ENCODE measurements at regions of chr9 and their contacts with region 1.

Region 1: GRCh38 chr9:94783102-94783664 is 56.7 kb downstream of the AOPEP start:
- DNase-seq: peak; percentile 27
- ATAC-seq: peak; percentile 90
- H3K4me3 ChIP-seq: no peak overlapping the region
- H3K27ac ChIP-seq: no peak overlapping the region
- H3K4me1 ChIP-seq: no peaks in the 10 kb centered on the region
- H3K27me3 ChIP-seq: no peaks in the 10 kb centered on the region
- CTCF ChIP-seq: peak; percentile 48 to 80 (median 71); a peak in 5 of 6 replicates
- EP300 ChIP-seq: no peak
- POLR2A ChIP-seq: no peak
- RAD21 ChIP-seq: peak; percentile 91

Region 2: GRCh38 chr9:94799578-94800264 is 16.5 kb after region 1 on chr9:
- CTCF ChIA-PET with region 1: interaction called, 8 read pairs
- POLR2A ChIA-PET with region 1: interaction called, 3 read pairs
- RAD21 ChIA-PET with region 1: interaction called, 29 read pairs
- SMC1A ChIA-PET with region 1: interaction called, 19 read pairs
- in situ Hi-C with region 1: no loop called
- intact Hi-C with region 1: no loop called
- DNase-seq: no peak
- ATAC-seq: no peak
- H3K4me3 ChIP-seq: no peak overlapping the region
- H3K27ac ChIP-seq: no peak overlapping the region
- H3K4me1 ChIP-seq: peaks cover 39% of the 10 kb centered on the region
- H3K27me3 ChIP-seq: no peaks in the 10 kb centered on the region
- CTCF ChIP-seq: no peak
- EP300 ChIP-seq: no peak
- POLR2A ChIP-seq: no peak
- RAD21 ChIP-seq: no peak

Region 3: DNA sequence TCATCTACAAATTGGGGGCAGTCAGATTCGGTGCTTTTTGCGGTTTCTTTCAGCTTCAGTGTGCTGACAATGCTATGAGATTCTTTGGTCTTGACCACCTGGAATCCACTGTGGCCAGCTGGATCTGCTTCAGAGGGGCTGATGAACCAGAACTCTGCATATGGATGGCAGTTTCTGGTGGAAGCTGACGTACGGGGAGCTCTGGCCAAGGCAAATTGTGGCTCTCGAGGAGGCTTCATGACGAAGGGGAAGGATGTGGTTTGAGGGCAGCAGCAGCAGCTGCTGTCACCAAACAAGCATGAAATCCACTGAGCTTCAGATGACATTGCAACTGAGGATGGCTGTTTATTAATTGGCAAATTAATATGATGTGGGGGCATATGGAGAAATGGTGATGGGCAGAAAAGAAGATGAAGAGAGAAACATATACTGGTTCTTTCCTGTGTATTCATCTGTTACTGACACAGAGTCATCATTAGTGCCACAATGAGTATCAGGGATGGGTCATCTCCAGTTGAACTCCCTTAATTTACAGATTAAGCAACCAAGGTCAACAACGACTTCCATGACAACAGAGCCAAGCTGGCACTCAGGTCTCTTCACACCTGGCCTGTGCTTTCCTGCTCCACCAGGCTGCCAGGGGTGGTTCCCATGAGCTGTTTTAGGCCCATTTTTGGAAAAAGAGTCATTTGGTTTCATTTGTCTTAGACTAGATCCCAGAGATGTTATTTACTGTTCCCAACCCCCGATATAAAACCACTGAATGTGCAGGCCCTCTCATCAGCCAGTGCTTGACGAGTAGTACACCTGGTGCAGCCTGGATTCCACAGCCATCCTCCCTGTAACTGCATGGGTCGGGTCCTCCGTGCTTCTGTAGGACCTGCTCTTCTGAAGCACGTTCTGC is 78.0 kb after region 1 on chr9:
- CTCF ChIA-PET with region 1: interaction called, 5 read pairs
- POLR2A ChIA-PET with region 1: no interaction called
- RAD21 ChIA-PET with region 1: interaction called, 5 read pairs
- SMC1A ChIA-PET with region 1: interaction called, 9 read pairs
- in situ Hi-C with region 1: no loop called
- intact Hi-C with region 1: loop called (anchors 5 kb)
- DNase-seq: peak; percentile 92
- ATAC-seq: peak; percentile 93
- H3K4me3 ChIP-seq: 0 out of 2 replicates have a peak overlapping the region, but pooled peaks have one; percentile 30
- H3K27ac ChIP-seq: peak overlapping the region; percentile 92
- H3K4me1 ChIP-seq: peaks cover 26% of the 10 kb centered on the region
- H3K27me3 ChIP-seq: no peaks in the 10 kb centered on the region
- CTCF ChIP-seq: no peak
- EP300 ChIP-seq: peak; percentile 97 to 99
- POLR2A ChIP-seq: peak; percentile 55; the same call in 1 of the 2 replicates
- RAD21 ChIP-seq: peak; percentile 25

Region 4: DNA sequence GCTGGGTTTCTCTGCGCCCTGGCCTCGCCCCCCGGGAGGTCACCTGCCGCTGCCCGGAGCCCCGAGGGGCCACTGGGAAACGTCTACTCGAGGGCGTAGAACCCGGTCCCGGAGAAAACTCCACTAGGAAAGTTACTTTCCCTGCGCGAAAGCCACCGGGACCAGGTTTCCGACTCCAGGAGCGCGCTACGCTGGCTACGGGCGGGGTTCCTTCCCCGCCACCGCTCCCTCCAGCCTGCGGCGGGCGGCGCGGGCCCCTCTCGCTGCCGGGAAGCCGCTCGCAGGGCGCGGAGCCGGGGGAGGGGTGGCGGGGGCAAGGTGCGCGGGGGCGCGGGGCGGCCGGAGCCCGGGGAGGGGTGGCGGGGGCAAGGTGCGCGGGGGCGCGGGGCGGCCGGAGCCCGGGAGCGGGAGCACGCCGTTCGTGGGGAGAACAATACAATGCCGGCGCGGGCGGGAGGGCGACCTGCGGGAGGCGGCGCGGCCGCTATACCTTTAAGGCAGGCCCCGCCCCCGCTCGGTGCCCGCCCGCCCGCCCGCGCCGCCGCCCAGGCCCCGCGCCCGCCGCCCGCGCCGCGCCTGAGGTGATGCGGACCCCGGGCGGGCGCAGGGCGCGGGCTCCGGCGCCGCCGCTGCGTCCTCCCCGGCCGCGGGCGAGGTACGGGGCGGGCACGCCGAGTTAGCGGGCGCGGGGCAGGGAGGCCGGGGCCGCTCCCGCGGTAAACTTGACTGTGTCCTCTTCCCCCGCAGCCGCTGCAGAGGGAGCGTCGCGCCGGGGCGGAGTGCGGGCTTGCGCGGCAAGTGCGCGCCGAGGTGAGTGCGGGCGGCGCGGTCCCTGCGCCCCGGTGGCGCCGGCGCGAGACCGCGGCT is 221.5 kb after region 1 on chr9:
- CTCF ChIA-PET with region 1: interaction called, 3 read pairs
- POLR2A ChIA-PET with region 1: no interaction called
- RAD21 ChIA-PET with region 1: no interaction called
- SMC1A ChIA-PET with region 1: no interaction called
- in situ Hi-C with region 1: no loop called
- intact Hi-C with region 1: loop called (anchors 10 kb)
- DNase-seq: no peak
- ATAC-seq: peak; percentile 84
- H3K4me3 ChIP-seq: peak overlapping the region; percentile 77
- H3K27ac ChIP-seq: peak overlapping the region; percentile 69
- H3K4me1 ChIP-seq: no peaks in the 10 kb centered on the region; the same call in 1 of the 2 replicates
- H3K27me3 ChIP-seq: no peaks in the 10 kb centered on the region
- CTCF ChIP-seq: no peak
- EP300 ChIP-seq: no peak
- POLR2A ChIP-seq: peak; percentile 60
- RAD21 ChIP-seq: no peak

Region 5: DNA sequence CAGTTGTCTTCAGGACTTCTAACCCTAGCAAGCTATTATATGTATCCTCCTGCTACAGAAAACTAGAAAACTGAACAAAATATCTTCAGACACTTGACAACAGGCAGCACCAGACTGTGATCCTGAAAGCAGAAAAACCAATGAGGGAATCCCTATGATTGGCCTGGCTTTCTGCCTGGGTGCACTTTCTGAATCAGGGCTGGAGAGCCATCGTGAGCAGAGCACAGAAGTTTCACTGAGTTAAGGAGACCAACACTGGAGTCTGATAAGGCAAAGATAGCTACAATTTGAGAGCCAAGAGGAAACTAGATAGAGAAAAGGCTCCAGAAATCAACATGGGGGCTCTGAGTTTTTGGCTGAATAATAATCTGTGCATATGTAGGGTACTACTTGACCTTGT is 427.8 kb after region 1 on chr9:
- CTCF ChIA-PET with region 1: no interaction called
- POLR2A ChIA-PET with region 1: no interaction called
- RAD21 ChIA-PET with region 1: no interaction called
- SMC1A ChIA-PET with region 1: no interaction called
- in situ Hi-C with region 1: no loop called
- intact Hi-C with region 1: no loop called
- DNase-seq: no peak
- ATAC-seq: peak; percentile 72
- H3K4me3 ChIP-seq: no peak overlapping the region
- H3K27ac ChIP-seq: no peak overlapping the region
- H3K4me1 ChIP-seq: peaks cover 3% of the 10 kb centered on the region; the same call in 1 of the 2 replicates
- H3K27me3 ChIP-seq: no peaks in the 10 kb centered on the region
- CTCF ChIP-seq: no peak
- EP300 ChIP-seq: no peak
- POLR2A ChIP-seq: no peak
- RAD21 ChIP-seq: no peak

Region 6: GRCh38 chr9:95268681-95269080 is 485.5 kb after region 1 on chr9:
- CTCF ChIA-PET with region 1: interaction called, 6 read pairs
- POLR2A ChIA-PET with region 1: no interaction called
- RAD21 ChIA-PET with region 1: no interaction called
- SMC1A ChIA-PET with region 1: interaction called, 3 read pairs
- in situ Hi-C with region 1: no loop called
- intact Hi-C with region 1: loop called (anchors 5 kb)
- DNase-seq: no peak
- ATAC-seq: peak; percentile 68
- H3K4me3 ChIP-seq: no peak overlapping the region
- H3K27ac ChIP-seq: no peak overlapping the region
- H3K4me1 ChIP-seq: peaks cover 18% of the 10 kb centered on the region
- H3K27me3 ChIP-seq: no peaks in the 10 kb centered on the region
- CTCF ChIP-seq: peak; percentile 31 to 56 (median 36); a peak in 4 of 6 replicates
- EP300 ChIP-seq: no peak
- POLR2A ChIP-seq: no peak
- RAD21 ChIP-seq: peak; percentile 76

Measured in GM12878 (cell line).